HEK293T (cell line): ENCODE measurements at regions of chr17 and their contacts with region 1.

Region 1: DNA sequence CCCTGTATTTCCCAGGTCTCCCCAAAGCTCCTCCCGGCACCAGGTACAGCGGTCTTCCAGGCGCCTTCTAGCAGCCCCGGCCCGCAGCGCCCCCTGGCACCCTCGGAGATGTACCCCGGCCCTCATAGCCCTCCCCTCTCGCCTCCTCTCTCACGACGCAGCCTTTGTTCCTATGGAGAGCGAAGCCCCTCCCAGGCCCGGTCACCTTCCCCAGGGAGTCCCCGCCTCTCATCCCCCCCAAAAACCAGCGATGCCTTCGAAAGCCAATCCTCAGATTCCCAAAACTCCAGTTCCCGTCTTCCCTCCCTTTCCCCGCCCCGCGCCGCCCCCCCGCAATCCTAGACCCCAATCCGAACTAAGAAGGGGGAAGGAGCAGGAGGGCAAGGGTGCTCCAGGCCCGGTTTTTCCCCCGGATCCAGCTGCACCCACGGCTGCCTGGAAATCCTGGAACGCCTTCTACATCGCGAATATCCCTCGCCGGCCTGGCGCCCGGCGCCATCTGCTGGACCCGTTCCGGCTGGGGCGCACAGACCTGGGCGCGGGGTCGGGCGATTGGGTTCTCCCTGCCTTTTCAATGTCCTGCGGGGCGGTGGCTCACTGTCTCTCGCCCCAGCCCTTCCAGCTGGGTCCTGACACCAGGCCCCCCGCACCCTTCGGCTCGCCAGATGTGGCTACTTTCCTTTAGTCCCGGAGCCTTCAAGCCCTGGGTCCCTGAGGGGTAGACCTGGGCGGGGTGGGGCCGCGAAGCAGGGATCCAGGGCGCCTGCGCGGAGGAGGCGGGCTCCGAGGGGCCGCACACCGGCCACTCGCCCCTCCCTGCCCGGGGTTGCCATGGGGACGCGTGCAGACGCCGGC is at the start of gene DNAH2:
- DNase-seq: peak; percentile 94

Region 2: GRCh38 chr17:7640783-7641182 is 76.3 kb before region 1 on chr17:
- CTCF ChIA-PET with region 1: no interaction called
- POLR2A ChIA-PET with region 1: no interaction called
- DNase-seq: no peak

Region 3: GRCh38 chr17:7703584-7704479 is 13.3 kb before region 1 on chr17:
- CTCF ChIA-PET with region 1: interaction called, 9 read pairs
- POLR2A ChIA-PET with region 1: interaction called, 19 read pairs
- DNase-seq: peak; percentile 58

Region 4: DNA sequence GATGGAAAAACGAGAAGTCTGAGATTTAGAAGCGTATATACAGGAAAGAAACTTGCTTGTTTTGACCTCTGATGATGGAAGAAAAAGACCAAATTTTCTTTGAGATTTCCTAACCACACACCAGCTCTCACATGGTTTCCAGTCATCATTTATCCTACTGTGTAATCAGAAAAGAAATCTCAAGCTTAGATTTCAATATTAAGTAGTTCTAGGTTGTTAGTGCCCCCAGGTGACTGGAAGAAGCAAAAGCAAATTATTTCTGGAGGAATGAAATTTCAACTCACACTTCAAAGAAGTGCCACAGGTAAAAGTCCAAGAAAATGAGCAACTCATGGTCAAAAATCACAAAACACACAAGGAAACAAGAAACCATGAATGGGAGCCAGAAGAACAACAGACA is 65.1 kb after region 1 on chr17:
- CTCF ChIA-PET with region 1: no interaction called
- POLR2A ChIA-PET with region 1: no interaction called
- DNase-seq: no peak